ENCODE measurements at regions of chr3 and their contacts with region 1.

Region 1: DNA sequence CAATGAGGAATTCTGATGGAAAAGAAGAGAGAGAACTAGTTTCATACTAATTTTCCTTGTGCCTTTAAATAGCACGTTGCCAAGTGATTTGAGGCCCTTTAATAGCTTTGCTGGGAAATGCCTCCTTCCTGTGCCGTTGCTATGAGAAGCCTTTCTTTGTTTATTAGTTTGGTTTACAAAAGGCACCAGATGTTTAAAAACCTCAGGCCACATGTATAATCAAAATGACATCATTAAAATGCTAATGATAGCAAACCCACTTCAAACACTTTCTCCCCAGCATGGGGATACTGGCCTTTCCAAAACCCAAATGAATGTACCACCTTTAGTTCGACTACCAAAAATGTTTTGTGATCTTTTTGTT is 50.0 kb upstream of the TBC1D23 start:
- DNase-seq: peak in 4 of 9 donors; percentile 1 to 25 (median 11)
- ATAC-seq: peak; percentile 54
- H3K4me3 ChIP-seq: no peak overlapping the region
- H3K4me3 Mint-ChIP-seq: peak overlapping the region in 6 of 10 donors; percentile 45 to 75 (median 64)
- H3K27ac ChIP-seq: no peak overlapping the region
- H3K27ac Mint-ChIP-seq: peak overlapping the region in 6 of 9 donors; percentile 41 to 92 (median 86)
- H3K4me1 ChIP-seq: peaks cover 10 to 12% of the 10 kb centered on the region in 2 donors
- H3K4me1 Mint-ChIP-seq: peaks cover 10 to 32% (median 16%) of the 10 kb centered on the region in 7 donors
- H3K27me3 ChIP-seq: no peaks in the 10 kb centered on the region
- H3K27me3 Mint-ChIP-seq: peaks cover 0 to 5% (median 0%) of the 10 kb centered on the region in 5 donors

Region 2: DNA sequence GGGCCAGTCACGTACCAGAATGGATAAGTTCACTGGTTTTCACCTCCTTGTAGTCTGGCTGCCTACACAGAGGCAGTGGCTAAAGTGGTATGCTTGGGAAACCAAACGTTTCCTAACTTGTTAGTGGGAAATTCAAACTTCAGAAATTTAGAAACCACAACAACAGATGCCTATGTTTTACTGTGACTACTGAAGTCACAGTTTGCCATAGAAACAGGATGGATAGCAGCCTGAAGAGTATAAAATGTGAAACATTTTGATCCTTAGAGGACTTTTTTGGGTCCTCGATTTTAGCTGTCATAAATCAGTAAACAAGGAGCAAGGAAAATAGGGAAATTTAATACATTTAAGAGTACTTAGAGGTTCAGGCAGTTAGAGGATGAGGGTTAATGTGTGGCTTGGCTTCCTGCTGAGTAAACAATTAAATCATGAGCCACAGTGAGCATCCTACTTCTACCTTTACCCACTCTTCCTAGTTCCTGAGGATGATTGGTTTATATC is 344.4 kb before region 1 on chr3:
- CTCF ChIA-PET with region 1: no interaction called
- POLR2A ChIA-PET with region 1: no interaction called
- intact Hi-C with region 1: loop called in 1 of 2 experiments (anchors 2 kb)
- DNase-seq: peak in 1 of 9 donors; percentile 28
- ATAC-seq: peak; percentile 42
- H3K4me3 ChIP-seq: no peak overlapping the region
- H3K4me3 Mint-ChIP-seq: peak overlapping the region in 2 of 10 donors; percentile 19 to 79
- H3K27ac ChIP-seq: no peak overlapping the region
- H3K27ac Mint-ChIP-seq: peak overlapping the region in 2 of 9 donors; percentile 70 to 89
- H3K4me1 ChIP-seq: peaks cover 0 to 8% of the 10 kb centered on the region in 2 donors
- H3K4me1 Mint-ChIP-seq: peaks cover 17 to 75% (median 28%) of the 10 kb centered on the region in 7 donors
- H3K27me3 ChIP-seq: no peaks in the 10 kb centered on the region
- H3K27me3 Mint-ChIP-seq: no peaks in the 10 kb centered on the region

Region 3: GRCh38 chr3:100089812-100090668 is 120.7 kb before region 1 on chr3:
- CTCF ChIA-PET with region 1: no interaction called
- POLR2A ChIA-PET with region 1: no interaction called
- intact Hi-C with region 1: loop called in 1 of 2 experiments (anchors 5 kb)
- DNase-seq: no peak
- ATAC-seq: peak; percentile 63
- H3K4me3 ChIP-seq: no peak overlapping the region
- H3K4me3 Mint-ChIP-seq: peak overlapping the region in 1 of 10 donors; percentile 36
- H3K27ac ChIP-seq: no peak overlapping the region
- H3K27ac Mint-ChIP-seq: peak overlapping the region in 1 of 9 donors; percentile 34
- H3K4me1 ChIP-seq: no peaks in the 10 kb centered on the region
- H3K4me1 Mint-ChIP-seq: peaks cover 0 to 36% (median 0%) of the 10 kb centered on the region in 7 donors
- H3K27me3 ChIP-seq: no peaks in the 10 kb centered on the region
- H3K27me3 Mint-ChIP-seq: peaks cover 0 to 3% (median 0%) of the 10 kb centered on the region in 5 donors

Region 4: GRCh38 chr3:100144251-100144866 is 66.4 kb before region 1 on chr3:
- CTCF ChIA-PET with region 1: no interaction called
- POLR2A ChIA-PET with region 1: no interaction called
- intact Hi-C with region 1: loop called in 1 of 2 experiments (anchors 5 kb)
- DNase-seq: no peak
- ATAC-seq: no peak
- H3K4me3 ChIP-seq: no peak overlapping the region
- H3K4me3 Mint-ChIP-seq: peak overlapping the region in 1 of 10 donors; percentile 23
- H3K27ac ChIP-seq: no peak overlapping the region
- H3K27ac Mint-ChIP-seq: peak overlapping the region in 1 of 9 donors; percentile 64
- H3K4me1 ChIP-seq: no peaks in the 10 kb centered on the region
- H3K4me1 Mint-ChIP-seq: peaks cover 0 to 25% (median 0%) of the 10 kb centered on the region in 7 donors
- H3K27me3 ChIP-seq: no peaks in the 10 kb centered on the region
- H3K27me3 Mint-ChIP-seq: no peaks in the 10 kb centered on the region

Region 5: DNA sequence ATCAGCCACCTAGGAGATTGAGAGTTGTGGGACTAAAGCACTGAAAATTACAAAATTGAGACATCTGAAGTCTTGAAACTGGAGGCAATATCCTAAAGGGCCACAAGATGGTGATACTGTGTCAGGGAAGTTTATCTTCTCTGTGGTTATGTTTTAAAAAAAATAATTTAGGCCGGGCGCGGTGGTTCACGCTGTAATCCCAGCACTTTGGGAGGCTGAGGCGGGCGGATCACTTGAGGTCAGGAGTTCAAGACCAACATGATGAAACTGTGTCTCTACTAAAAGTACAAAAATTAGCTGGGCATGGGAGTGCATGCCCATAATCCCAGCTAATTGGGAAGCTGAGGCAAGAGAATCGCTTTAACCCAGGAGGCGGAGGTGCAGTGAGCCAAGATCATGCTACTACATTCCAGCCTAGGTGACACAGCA is 105.9 kb after region 1 on chr3:
- CTCF ChIA-PET with region 1: no interaction called
- POLR2A ChIA-PET with region 1: no interaction called
- intact Hi-C with region 1: no loop called
- DNase-seq: peak in 7 of 9 donors; percentile 13 to 60 (median 54)
- ATAC-seq: peak; percentile 95
- H3K4me3 ChIP-seq: no peak overlapping the region
- H3K4me3 Mint-ChIP-seq: peak overlapping the region in 6 of 10 donors; percentile 32 to 67 (median 50)
- H3K27ac ChIP-seq: no peak overlapping the region
- H3K27ac Mint-ChIP-seq: peak overlapping the region in 6 of 9 donors; percentile 57 to 87 (median 70)
- H3K4me1 ChIP-seq: no peaks in the 10 kb centered on the region
- H3K4me1 Mint-ChIP-seq: peaks cover 0 to 19% (median 14%) of the 10 kb centered on the region in 7 donors
- H3K27me3 ChIP-seq: no peaks in the 10 kb centered on the region
- H3K27me3 Mint-ChIP-seq: no peaks in the 10 kb centered on the region

Measured in naive thymus-derived CD4-positive, alpha-beta T cell (primary cell).